Endothelial cell of umbilical vein (primary cell): ENCODE measurements at regions of chr14 and their contacts with region 1.

Region 1: GRCh38 chr14:54175298-54175942 is 218.8 kb upstream of the BMP4 start:
- DNase-seq: peak; percentile 91
- H3K4me3 ChIP-seq: no peak overlapping the region
- H3K27ac ChIP-seq: no peak overlapping the region
- H3K4me1 ChIP-seq: peaks cover 36% of the 10 kb centered on the region
- H3K27me3 ChIP-seq: no peaks in the 10 kb centered on the region
- CTCF ChIP-seq: peak; percentile 57 to 62
- POLR2A ChIP-seq: no peak

Region 2: DNA sequence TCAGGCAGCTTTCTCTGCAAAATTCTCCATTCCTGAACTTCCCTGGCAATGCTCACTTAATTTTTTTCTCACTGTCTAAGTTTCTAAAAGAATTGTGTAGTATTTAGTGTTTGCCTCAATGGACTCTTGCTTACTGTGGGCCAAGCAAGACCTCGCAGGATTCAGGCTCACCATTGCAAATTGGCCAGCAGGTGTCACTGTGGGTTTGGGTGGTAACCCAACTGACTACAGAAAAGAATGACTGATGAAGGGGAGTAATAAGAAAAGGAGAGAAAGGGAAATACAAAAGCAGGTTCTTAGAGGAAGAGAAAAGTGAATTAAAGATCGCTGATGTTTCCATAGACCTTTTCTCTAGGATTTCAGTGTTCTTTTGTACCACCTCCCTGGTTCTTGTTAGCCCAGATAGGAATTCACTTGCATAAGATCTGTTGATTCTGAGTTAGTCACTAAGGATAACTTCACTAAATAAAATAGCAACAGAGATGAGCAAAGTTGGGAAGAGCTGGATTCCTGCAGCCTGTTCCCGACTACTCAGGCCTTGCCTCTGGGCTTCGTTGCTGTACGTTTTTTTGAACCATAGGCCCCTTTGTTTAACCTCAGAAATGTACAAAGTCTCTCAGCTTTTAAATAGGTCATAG is 635.8 kb before region 1 on chr14:
- CTCF ChIA-PET with region 1: interaction called, 76 read pairs
- POLR2A ChIA-PET with region 1: no interaction called
- dilution Hi-C with region 1: no loop called
- intact Hi-C with region 1: loop called (anchors 1 kb)
- DNase-seq: peak; percentile 94
- H3K4me3 ChIP-seq: no peak overlapping the region
- H3K27ac ChIP-seq: no peak overlapping the region
- H3K4me1 ChIP-seq: peaks cover 43% of the 10 kb centered on the region
- H3K27me3 ChIP-seq: no peaks in the 10 kb centered on the region
- CTCF ChIP-seq: peak; percentile 74 to 82
- POLR2A ChIP-seq: no peak

Region 3: DNA sequence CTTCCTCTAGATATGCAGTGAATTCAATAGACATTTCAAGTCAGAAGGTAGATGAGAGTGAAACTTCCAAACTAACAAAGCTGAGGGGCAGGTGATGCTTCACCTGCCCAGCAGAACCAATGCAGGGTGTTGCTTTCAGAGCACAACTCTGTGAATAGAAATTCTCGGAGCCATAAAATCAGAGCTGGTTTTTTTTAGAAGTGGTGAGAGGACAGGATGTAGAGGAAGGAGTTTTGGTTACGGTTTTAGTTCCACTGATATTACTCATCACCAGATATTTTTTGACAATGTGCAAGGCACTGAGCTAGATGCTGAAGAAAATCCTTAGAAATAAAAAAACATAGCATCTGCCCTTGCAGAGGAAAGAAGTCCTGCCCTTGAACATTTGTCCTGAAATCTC is 281.0 kb before region 1 on chr14:
- CTCF ChIA-PET with region 1: interaction called, 4 read pairs
- POLR2A ChIA-PET with region 1: no interaction called
- dilution Hi-C with region 1: no loop called
- intact Hi-C with region 1: loop called (anchors 2 kb)
- DNase-seq: peak; percentile 55
- H3K4me3 ChIP-seq: no peak overlapping the region
- H3K27ac ChIP-seq: peak overlapping the region; percentile 52
- H3K4me1 ChIP-seq: peaks cover 37% of the 10 kb centered on the region
- H3K27me3 ChIP-seq: no peaks in the 10 kb centered on the region
- CTCF ChIP-seq: no peak
- POLR2A ChIP-seq: no peak

Region 4: DNA sequence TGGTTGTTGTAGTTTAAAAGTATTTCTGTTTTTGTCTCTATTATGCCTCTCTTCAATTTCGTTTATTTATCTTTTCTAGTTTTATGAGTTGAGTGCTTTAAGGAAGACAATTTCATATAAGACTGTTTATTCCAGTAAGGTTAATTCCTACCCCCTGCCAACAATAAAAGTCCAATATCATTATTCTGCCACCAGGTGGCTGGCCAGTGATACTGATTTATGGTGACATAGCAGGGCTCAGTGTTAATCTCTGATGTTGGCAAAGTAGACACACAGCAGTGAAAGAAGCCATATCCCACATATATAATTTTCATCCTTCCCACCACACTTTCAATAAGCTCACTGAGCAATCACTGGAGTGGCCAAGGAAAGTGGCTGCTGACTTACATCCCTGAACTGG is 149.8 kb before region 1 on chr14:
- CTCF ChIA-PET with region 1: interaction called, 16 read pairs
- POLR2A ChIA-PET with region 1: no interaction called
- dilution Hi-C with region 1: no loop called
- intact Hi-C with region 1: loop called (anchors 1 kb)
- DNase-seq: peak; percentile 73
- H3K4me3 ChIP-seq: no peak overlapping the region
- H3K27ac ChIP-seq: no peak overlapping the region
- H3K4me1 ChIP-seq: no peaks in the 10 kb centered on the region
- H3K27me3 ChIP-seq: no peaks in the 10 kb centered on the region
- CTCF ChIP-seq: peak; percentile 27 to 46
- POLR2A ChIP-seq: no peak

Region 5: GRCh38 chr14:54211551-54212308 is 36.3 kb after region 1 on chr14:
- CTCF ChIA-PET with region 1: interaction called, 3 read pairs
- POLR2A ChIA-PET with region 1: no interaction called
- dilution Hi-C with region 1: no loop called
- intact Hi-C with region 1: loop called (anchors 2 kb)
- DNase-seq: peak; percentile 86
- H3K4me3 ChIP-seq: no peak overlapping the region
- H3K27ac ChIP-seq: peak overlapping the region; percentile 91
- H3K4me1 ChIP-seq: peaks cover 25% of the 10 kb centered on the region
- H3K27me3 ChIP-seq: no peaks in the 10 kb centered on the region
- CTCF ChIP-seq: no peak
- POLR2A ChIP-seq: no peak

Region 6: GRCh38 chr14:54338696-54339317 is 163.4 kb after region 1 on chr14:
- CTCF ChIA-PET with region 1: interaction called, 73 read pairs
- POLR2A ChIA-PET with region 1: no interaction called
- dilution Hi-C with region 1: no loop called
- intact Hi-C with region 1: no loop called
- DNase-seq: peak; percentile 78
- H3K4me3 ChIP-seq: no peak overlapping the region
- H3K27ac ChIP-seq: no peak overlapping the region
- H3K4me1 ChIP-seq: peaks cover 10% of the 10 kb centered on the region
- H3K27me3 ChIP-seq: no peaks in the 10 kb centered on the region
- CTCF ChIP-seq: peak; percentile 63 to 68
- POLR2A ChIP-seq: no peak